Right cardiac atrium (tissue), 5 donors: ENCODE measurements at regions of chr9 and their contacts with region 1.

Region 1: GRCh38 chr9:21812946-21813568 is 10.6 kb downstream of the MTAP start:
- DNase-seq: peak; percentile 57 to 83 (median 81)
- ATAC-seq: peak; percentile 77 to 85
- H3K4me3 ChIP-seq: no peak overlapping the region
- H3K27ac ChIP-seq: no peak overlapping the region
- H3K4me1 ChIP-seq: peaks cover 7% of the 10 kb centered on the region
- H3K27me3 ChIP-seq: no peaks in the 10 kb centered on the region

Region 2: DNA sequence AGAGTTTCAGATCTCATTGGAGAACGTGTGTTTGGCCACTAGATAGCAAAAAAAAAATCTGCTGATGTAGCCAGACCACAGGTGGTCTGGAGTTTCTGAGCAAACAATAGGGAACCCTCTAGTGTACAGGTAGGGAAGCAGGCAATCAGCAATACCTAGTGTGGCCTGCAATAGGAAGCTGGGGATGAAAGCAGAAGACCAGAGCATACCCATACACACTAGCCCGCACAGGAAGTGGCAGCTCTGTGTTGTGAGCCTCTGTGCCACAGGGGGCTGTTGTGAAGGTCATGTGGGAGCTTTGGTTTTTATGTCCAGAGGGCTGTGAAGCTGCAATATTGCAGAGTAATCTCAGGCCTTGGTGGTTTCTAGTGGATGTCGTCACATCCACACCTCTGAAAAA is 70.6 kb after region 1 on chr9:
- intact Hi-C with region 1: no loop called
- DNase-seq: no peak
- ATAC-seq: no peak
- H3K4me3 ChIP-seq: no peak overlapping the region
- H3K27ac ChIP-seq: no peak overlapping the region
- H3K4me1 ChIP-seq: no peaks in the 10 kb centered on the region
- H3K27me3 ChIP-seq: no peaks in the 10 kb centered on the region

Region 3: DNA sequence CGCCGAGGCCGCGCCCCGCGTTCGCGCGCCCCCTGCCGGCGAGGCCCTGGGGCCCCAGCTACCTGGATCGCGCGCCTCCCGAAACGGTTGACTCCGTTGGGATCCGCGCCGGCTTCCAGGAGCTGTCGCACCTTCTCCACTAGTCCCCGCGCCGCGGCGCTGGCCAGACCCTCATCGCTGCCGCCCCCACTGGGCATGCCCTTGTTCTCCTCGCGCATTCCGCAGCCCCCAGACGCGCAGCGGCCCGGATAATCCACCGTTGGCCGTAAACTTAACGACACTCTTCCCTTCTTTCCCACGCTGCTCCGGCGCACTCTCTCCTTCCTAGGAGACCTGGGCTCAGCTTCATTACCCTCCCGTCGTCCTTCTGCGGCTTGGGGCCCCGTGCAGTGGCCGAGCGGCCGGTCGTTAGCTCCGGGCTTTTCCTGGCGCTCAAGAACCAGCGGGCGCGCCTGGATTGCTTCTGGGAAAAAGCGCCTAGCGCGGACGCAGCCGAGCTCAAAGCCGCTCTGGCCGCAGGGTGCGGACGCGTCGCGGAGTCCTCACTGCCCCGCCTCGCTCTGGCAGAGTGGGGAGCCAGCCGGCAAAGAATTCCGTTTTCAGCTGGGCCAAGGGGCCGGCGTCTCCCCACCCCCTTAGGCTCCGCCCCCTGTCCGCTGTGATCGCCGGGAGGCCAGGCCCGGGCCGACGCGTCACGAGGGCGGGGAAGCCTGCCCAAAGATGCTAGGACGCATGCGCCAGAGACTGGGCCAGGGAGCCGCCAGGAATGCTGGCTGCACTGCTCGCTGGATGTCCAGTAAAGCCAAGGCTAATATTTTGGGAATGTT is 195.9 kb after region 1 on chr9 and contains the start of gene CDKN2B:
- intact Hi-C with region 1: loop called (anchors 10 kb)
- DNase-seq: peak; percentile 98
- ATAC-seq: peak; percentile 100
- H3K4me3 ChIP-seq: peak within 1 kb of the TSS; percentile 61
- H3K27ac ChIP-seq: peak within 1 kb of the TSS; percentile 83
- H3K4me1 ChIP-seq: no peaks in the 10 kb centered on the region
- H3K27me3 ChIP-seq: no peaks in the 10 kb centered on the region
- total RNA-seq, gene CDKN2B: 0.71 to 1.7 (median 1.3) TPM

Region 4: DNA sequence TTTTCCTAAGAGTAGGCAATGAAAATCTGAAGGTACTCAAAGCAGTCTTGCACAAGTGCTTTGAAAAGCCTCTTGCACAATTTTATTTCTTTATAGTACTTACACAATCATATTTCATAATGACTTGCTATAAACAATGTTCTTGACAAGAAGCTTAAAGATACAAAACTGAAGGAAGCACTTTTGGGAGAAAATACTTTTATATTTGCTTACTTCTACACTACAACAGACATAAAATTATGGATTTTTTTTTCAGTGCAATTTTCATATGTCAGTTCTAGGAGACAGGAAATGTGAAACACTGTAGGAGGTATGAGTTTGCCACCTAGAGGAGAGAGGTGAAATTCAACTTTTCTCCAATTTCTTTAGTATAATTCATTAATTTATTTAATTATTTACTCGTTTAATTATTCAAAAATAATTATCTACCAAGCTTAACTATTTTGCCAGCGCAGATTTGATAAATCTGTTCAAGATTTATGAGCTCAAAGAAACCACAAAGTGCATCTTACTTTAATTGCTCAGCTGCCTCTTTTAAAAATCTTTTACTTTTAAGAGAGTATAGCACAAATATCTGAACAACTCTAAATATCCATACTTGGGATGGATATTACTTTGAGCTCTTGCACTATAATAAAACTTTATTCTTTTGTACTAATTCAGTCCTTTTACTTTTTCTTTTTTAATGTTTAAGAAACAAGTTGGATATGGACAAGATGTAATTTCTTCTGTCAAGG is 225.1 kb after region 1 on chr9:
- intact Hi-C with region 1: loop called in 3 of 4 experiments (anchors 10 kb)
- DNase-seq: no peak
- ATAC-seq: no peak
- H3K4me3 ChIP-seq: no peak overlapping the region
- H3K27ac ChIP-seq: no peak overlapping the region
- H3K4me1 ChIP-seq: no peaks in the 10 kb centered on the region
- H3K27me3 ChIP-seq: no peaks in the 10 kb centered on the region

Region 5: DNA sequence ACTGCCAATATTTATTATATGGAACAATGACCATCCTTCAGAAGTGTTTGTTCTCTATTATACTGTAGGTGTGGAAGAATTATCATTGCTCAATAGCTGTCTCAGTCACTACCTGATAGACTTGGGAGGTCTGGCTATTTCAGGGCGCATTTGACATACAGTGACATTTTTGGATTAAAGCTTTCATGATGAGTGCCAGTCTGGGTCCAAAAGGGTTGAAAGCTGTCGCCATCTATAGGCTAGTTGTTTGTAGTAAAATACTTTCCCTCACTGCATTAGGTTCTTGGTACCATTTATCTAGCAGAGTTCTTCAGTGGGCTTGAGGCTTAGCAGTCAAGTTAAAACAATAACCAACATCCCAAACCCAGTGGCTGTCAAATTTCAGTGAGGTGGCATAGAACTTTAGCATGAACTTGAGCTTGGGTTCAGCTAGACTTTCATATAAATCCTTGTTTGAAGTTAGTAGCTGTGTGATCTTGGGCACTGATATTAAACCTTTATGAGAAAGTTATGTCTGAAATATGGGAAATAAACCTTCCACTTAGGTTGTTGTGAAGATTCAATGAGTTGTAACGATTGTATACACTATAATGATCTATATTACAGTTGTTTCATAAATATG is 306.6 kb after region 1 on chr9:
- intact Hi-C with region 1: loop called in 1 of 4 experiments (anchors 10 kb)
- DNase-seq: no peak
- ATAC-seq: peak; percentile 35 to 45
- H3K4me3 ChIP-seq: no peak overlapping the region
- H3K27ac ChIP-seq: no peak overlapping the region
- H3K4me1 ChIP-seq: no peaks in the 10 kb centered on the region
- H3K27me3 ChIP-seq: no peaks in the 10 kb centered on the region

Region 6: DNA sequence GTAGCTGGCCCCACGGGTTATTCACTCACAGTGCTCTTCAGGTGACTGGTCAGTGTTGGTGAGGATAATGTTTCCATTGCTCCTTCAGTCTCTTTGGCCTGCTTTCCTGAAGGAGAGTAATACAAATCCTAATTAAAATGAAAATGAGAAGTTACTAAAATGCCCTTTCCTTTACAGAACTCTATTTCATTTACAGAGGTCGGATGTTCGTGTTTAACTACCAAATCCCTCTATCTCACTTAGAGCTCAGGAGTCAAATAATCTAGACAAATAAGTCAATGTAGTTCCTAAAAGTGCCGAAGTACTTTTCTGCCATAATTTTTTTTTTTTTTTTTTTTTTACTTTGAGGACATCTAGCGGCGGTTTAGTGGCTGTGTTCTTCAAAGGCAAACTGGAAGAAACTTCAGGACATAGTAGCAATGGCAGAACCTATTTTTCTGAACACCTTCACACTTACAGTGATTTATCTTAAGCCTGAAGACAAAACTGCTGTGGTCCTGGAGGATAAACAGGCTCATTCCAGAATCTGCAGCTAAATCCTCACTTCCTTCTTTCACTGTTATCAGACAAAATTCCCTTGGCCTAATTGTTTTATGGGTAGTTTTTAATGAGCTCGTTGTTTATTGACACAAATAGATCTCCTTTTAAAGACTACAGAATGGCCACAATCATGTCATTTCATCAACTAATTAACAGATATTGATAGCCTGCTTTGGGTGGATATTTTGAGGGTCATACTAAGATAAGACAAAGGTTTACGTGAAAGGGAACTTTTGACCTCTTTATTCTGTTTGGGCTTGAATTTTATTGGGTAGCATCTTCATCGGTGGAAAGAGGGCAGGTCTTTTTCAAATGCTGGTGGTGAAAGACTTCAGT is 426.0 kb after region 1 on chr9:
- intact Hi-C with region 1: loop called (anchors 5 to 10 kb)
- DNase-seq: no peak
- ATAC-seq: no peak
- H3K4me3 ChIP-seq: no peak overlapping the region
- H3K27ac ChIP-seq: no peak overlapping the region
- H3K4me1 ChIP-seq: no peaks in the 10 kb centered on the region
- H3K27me3 ChIP-seq: no peaks in the 10 kb centered on the region